ENCODE measurements at regions of chr10 and their contacts with region 1.

Region 1: DNA sequence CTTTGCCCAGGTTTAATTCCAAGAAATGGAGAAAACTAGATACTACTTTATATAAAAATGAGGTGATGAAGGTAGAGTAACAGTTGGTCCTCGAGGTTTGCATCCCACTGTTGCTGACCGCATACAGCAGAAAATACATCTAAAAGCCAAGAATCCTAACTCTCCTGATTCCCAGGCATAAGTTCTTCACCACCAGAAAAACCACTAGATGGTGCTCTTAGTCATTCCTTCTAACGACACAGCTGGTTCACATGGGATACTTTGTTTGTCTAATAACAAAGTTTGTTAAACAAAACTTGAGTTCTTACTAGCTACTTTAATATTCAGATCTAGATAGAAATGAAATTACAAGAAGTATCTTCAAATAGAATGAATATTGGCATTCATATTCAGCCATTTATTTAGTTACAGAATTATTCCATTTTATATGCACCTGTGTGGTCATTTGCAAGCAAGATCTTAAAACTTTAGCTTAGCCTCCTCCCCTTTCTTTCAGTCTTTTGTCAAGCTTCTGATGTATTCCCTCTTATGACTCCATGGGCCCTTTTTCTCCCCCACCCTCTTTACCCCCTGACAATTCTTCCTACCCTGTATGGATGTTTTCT is 54.1 kb upstream of the CYP26C1 start:
- DNase-seq: no peak
- H3K4me3 ChIP-seq: no peak overlapping the region
- CTCF ChIP-seq: peak; percentile 56

Region 2: DNA sequence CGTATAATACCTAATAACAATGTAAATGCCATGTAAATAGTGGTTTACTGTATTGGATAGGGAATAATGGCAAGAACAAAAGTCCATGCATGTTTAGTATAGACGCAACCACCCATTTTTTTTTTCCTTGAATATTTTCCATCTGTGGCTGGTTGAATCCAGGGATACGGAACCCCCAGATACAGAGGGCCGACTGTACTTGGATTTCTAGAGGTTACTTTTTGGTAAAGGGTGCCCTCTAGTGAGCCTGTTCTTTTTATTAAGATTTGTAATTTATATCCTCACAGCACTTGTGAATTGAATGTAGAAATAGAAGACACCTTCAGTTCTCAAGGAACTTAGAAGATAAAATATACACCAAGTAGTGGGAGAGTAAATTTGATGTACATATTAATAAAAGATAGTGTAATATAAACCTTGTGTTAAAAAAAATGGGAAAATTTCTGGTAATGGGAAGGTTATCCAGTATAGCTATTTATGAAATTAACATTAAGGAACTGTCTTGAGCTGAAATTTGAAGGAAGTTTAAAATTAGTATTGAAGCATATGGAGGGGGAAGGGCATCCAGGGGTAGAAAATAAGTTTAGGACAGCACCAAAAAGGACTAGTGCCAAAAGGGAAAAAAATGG is 126.2 kb before region 1 on chr10:
- CTCF ChIA-PET with region 1: interaction called, 13 read pairs
- POLR2A ChIA-PET with region 1: no interaction called
- DNase-seq: no peak
- H3K4me3 ChIP-seq: no peak overlapping the region
- CTCF ChIP-seq: peak; percentile 22

Region 3: GRCh38 chr10:92990615-92991014 is 15.9 kb before region 1 on chr10:
- CTCF ChIA-PET with region 1: interaction called, 42 read pairs
- POLR2A ChIA-PET with region 1: no interaction called
- DNase-seq: no peak
- H3K4me3 ChIP-seq: no peak overlapping the region
- CTCF ChIP-seq: no peak

Region 4: DNA sequence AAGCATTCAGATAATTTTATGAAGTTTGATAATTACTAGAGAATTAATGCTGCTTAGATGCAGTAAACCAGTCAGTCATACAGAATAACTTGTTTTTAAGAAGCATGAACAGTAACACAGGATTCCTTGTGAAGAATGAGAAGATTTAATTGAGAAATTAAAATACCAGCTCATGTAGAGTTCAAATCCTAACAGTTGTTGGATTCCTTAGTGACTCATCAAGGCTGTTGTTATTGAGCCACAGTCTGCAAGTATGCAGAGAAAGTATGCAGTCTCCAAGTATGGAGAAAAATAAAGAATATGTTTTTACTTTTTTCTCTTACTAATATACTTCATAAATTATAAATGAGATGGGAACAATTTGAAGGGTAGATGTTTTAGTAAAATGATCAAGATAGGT is 23.9 kb after region 1 on chr10:
- CTCF ChIA-PET with region 1: interaction called, 336 read pairs
- POLR2A ChIA-PET with region 1: no interaction called
- DNase-seq: peak; percentile 59
- H3K4me3 ChIP-seq: no peak overlapping the region
- CTCF ChIP-seq: no peak